Activated naive CD4-positive, alpha-beta T cell treated with anti-CD3 and anti-CD28 coated beads for 36 hours (primary cell): ENCODE measurements at regions of chr11 and their contacts with region 1.

Region 1: DNA sequence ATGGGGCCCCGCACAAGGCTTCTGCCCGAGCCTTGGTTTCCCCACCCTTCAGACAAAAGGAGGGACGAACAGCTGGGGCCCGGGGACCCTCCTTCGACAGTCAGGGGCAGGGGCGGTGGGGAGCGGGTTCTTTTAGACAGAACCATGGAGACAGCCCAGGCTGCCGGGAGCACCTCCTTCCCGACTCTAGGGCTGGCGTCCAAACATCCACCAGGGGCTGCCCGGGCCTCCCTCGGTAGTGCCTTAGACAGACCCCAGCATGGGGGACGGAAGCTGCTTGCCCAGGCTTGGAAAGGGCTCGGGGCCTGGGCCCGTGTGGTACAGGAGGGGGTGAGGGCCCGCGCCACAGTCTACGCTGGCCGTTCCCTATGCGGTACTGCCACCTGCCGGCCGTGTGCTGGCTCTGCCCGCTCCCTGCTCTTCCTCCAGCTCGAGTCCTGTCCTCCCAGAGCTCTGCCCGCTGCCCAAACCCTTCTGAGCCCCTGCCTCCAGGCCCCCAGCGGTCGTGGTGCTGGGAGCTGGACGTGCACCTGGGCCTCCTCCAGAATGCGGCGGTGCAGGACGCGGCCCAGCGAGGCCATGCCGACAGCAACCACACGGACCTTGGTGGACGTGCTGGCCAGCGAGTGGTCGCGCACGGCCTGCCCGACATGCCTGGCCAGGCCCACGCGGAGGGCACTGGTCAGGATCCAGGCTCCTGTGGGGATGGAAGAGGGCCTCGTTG is 20.1 kb downstream of the TSSC4 start:
- DNase-seq: peak; percentile 75
- H3K4me3 Mint-ChIP-seq: no peak overlapping the region
- H3K27ac Mint-ChIP-seq: no peak overlapping the region
- H3K4me1 Mint-ChIP-seq: peaks cover 2% of the 10 kb centered on the region
- H3K27me3 Mint-ChIP-seq: no peaks in the 10 kb centered on the region

Region 2: DNA sequence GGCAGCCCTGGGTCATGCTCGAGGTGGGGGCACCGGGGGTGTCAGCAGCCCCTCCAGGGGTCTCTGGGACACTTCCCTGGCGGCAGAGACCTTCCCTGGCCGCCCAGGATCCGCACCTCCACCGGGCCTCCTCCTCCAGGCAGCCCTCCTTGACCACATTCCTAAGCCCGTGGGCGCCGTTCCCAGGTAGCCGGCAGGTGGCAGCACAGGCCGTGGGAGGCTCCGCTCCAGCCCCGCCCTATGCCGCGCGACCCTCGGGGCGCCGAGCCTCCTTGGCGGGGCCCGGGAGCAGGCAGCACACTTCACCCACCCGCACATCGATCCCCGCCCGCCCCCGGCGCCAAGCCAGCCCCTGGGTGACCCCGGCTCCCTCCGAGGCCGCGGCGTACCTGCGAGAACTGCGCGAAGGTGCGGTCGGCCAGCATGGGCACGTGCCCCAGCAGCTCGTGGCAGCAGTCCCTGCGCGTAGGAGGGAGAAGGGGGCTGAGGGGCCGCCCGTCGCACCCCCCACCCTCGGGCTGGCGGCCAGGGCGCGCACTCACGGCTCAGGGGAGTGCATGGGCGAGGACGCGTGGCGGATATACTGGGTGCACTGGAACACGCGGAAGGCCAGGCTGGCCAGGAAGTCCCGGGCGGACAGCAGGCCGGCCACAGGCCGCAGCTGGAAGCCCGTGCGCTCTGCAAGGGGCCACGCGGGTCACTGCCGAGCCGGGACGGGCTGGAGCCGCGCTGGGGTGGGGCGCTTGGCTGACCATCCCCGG is 254.4 kb before region 1 on chr11:
- CTCF ChIA-PET with region 1: interaction called, 15 read pairs
- intact Hi-C with region 1: loop called (anchors 1 kb)
- DNase-seq: peak; percentile 56
- H3K4me3 Mint-ChIP-seq: no peak overlapping the region
- H3K27ac Mint-ChIP-seq: no peak overlapping the region
- H3K4me1 Mint-ChIP-seq: no peaks in the 10 kb centered on the region
- H3K27me3 Mint-ChIP-seq: no peaks in the 10 kb centered on the region

Region 3: GRCh38 chr11:2186669-2187279 is 233.9 kb before region 1 on chr11:
- CTCF ChIA-PET with region 1: interaction called, 29 read pairs
- intact Hi-C with region 1: loop called (anchors 1 kb)
- DNase-seq: peak; percentile 64
- H3K4me3 Mint-ChIP-seq: no peak overlapping the region
- H3K27ac Mint-ChIP-seq: no peak overlapping the region
- H3K4me1 Mint-ChIP-seq: peaks cover 5% of the 10 kb centered on the region
- H3K27me3 Mint-ChIP-seq: no peaks in the 10 kb centered on the region

Region 4: DNA sequence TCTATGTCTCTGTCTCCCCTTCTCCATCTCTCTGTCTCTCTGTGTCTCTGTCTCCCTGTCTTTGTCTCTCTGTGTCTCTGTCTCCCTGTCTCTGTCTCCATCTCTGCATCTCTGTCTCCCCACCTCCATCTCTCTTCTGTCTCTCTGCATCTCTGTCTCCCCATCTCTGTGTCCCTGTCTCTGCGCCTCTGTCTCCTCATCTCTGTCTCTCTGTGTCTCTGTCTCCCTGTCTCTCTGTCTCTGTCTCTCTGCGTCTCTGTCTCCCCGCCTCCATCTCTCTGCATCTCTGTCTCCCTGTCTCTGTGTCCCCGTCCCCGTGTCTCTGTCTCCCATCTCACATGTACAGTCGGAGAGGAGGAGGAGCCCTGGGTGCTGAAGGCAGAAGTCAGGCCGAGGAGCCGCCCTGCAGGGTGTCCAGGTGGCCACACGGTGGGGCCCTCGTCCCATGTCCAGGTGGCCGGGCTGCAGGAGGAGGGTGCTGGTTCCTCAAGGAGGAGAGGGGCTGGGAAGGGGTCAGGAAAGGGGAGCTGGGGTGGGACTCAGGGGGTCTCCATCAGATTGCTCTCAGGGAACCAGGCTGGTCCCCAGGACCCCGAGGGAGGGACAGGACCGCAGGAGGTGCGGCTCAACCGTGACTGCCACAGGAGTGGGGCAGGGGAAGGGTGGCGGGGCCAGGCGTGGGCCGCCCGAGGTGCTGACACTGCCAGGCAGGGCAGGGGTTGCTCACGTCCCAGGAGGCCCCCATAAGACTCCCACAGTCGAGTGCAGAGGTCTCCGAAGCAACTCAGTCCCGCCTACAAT is 223.5 kb before region 1 on chr11:
- CTCF ChIA-PET with region 1: interaction called, 27 read pairs
- intact Hi-C with region 1: loop called (anchors 1 kb)
- DNase-seq: peak; percentile 82
- H3K4me3 Mint-ChIP-seq: no peak overlapping the region
- H3K27ac Mint-ChIP-seq: no peak overlapping the region
- H3K4me1 Mint-ChIP-seq: no peaks in the 10 kb centered on the region
- H3K27me3 Mint-ChIP-seq: no peaks in the 10 kb centered on the region